Activated CD4-positive, alpha-beta memory T cell treated with anti-CD3 and anti-CD28 coated beads for 36 hours (primary cell): ENCODE measurements at regions of chr1 and their contacts with region 1.

Region 1: GRCh38 chr1:36369061-36369861 is 16.5 kb downstream of the STK40 start:
- DNase-seq: peak; percentile 90
- H3K4me3 Mint-ChIP-seq: no peak overlapping the region
- H3K27ac Mint-ChIP-seq: peak overlapping the region; percentile 62
- H3K4me1 Mint-ChIP-seq: peaks cover 67% of the 10 kb centered on the region
- H3K27me3 Mint-ChIP-seq: no peaks in the 10 kb centered on the region

Region 2: DNA sequence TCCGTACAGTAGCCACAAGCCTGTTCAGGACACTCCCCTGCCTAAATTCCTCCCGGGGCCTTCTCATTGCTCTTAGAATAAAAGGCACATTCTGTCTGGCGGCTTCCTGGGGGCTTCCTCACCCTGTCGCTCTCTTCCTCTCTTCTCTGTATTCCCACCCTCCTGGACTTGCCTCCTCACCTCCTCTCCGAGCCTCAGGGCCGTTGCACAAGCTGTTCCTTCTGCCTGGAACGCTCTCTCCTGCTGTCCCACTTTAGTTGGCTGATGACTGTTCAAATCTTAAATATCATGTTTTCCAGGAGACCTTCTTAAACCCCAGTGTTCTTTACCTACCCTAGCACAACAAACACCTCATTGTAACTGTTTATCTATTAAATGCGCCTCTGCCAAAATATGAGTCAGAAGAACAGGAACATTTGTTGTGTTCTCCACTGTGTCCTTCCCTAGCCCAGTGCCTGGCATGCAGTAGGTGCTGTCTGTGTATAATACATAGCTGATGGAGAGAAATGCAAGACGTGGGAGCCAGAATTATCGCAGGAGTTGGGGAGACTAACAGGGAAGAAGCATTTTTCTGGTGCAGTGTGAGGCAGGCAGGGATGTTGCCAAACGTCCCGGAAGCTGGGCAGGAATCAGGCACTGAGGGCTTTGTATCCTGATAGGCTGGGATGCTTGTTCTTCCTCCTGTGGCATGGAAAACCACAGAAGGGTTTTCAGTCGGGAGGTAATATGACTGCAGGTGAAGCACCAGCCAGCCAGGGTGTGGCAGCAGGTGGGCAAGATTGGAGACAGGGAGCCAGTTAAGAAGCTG is 169.1 kb before region 1 on chr1:
- CTCF ChIA-PET with region 1: no interaction called
- POLR2A ChIA-PET with region 1: no interaction called
- intact Hi-C with region 1: no loop called
- DNase-seq: no peak
- H3K4me3 Mint-ChIP-seq: no peak overlapping the region
- H3K27ac Mint-ChIP-seq: no peak overlapping the region
- H3K4me1 Mint-ChIP-seq: no peaks in the 10 kb centered on the region
- H3K27me3 Mint-ChIP-seq: no peaks in the 10 kb centered on the region

Region 3: GRCh38 chr1:36306902-36307456 is 62.3 kb before region 1 on chr1:
- CTCF ChIA-PET with region 1: interaction called, 17 read pairs
- POLR2A ChIA-PET with region 1: interaction called, 3 read pairs
- intact Hi-C with region 1: no loop called
- DNase-seq: peak; percentile 95
- H3K4me3 Mint-ChIP-seq: peak overlapping the region; percentile 95
- H3K27ac Mint-ChIP-seq: peak overlapping the region; percentile 79
- H3K4me1 Mint-ChIP-seq: peaks cover 43% of the 10 kb centered on the region
- H3K27me3 Mint-ChIP-seq: no peaks in the 10 kb centered on the region

Region 4: GRCh38 chr1:36342481-36343478 is 26.5 kb before region 1 on chr1:
- CTCF ChIA-PET with region 1: interaction called, 25 read pairs
- POLR2A ChIA-PET with region 1: no interaction called
- intact Hi-C with region 1: loop called (anchors 2 kb)
- DNase-seq: peak; percentile 70
- H3K4me3 Mint-ChIP-seq: no peak overlapping the region
- H3K27ac Mint-ChIP-seq: no peak overlapping the region
- H3K4me1 Mint-ChIP-seq: peaks cover 16% of the 10 kb centered on the region
- H3K27me3 Mint-ChIP-seq: no peaks in the 10 kb centered on the region

Region 5: DNA sequence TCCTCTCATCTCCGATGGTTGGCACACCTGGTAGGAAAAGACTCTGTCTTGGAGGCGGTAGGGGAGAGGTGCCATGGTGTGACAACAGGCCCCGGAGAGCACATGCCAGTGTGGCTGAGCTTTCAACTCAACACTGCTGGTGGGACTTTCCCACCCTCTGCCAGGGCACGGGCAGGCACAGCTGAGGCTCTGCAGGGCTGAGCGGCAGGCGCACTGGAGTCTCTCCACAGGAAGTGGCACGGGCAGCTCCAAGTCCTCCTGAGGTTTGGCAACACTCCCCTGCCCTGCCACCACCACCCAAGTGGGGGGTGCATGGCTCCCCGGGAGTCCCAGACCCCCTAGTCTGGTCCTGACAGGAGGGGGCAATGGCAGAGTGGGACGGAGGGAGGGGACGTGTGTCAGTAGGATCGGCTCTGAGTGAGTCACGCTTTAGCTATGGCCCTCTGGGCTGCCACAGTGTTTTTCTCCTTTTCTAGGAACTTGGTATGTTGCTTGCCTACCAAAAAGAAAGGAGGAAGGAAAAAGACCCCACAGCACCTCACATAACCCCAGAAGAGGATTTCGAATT is 18.5 kb before region 1 on chr1:
- CTCF ChIA-PET with region 1: interaction called, 39 read pairs
- POLR2A ChIA-PET with region 1: interaction called, 4 read pairs
- intact Hi-C with region 1: no loop called
- DNase-seq: peak; percentile 67
- H3K4me3 Mint-ChIP-seq: no peak overlapping the region
- H3K27ac Mint-ChIP-seq: peak overlapping the region; percentile 73
- H3K4me1 Mint-ChIP-seq: peaks cover 32% of the 10 kb centered on the region
- H3K27me3 Mint-ChIP-seq: no peaks in the 10 kb centered on the region

Region 6: DNA sequence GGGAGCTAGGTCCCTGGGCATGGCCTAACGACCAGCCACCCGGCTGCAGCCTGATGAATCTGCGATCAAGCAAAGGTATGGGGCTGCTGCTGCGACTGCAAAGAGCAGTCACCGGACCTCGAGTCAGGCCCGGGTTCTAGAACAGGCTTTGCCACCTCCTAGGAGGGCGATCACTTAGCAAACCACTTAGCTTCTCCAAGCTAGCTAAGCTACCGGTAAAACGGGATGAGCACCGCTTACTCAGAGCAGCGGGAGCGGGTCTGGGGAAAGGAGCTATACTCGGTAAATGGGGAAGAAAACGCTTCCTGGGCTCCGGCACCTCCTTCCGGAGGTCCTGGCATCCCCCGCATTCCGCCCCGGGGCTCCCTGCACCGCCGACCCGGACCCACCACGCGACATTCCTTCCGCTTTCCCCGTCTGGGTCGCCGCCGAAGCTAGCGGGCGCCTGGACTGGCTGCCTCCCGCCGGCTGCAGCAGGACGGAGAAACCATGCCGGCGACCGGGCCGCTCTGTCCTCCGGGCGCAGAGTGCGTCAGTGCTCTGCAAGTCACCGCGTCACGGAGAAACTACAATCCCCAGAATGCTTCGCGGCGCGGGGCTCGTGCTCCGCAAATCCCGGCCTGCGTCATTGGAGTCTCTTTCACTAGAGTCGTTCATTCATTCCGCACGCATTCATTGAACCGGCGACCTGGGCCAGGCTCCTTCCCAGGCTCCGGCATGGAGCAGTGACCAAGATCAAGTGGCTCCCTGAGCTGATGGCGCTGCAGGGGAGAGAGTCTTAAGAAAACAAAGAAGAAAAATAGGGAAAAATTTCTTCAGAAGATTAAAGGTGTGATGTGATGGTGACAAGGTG is 28.3 kb after region 1 on chr1 and contains the start of gene LSM10:
- CTCF ChIA-PET with region 1: interaction called, 20 read pairs
- POLR2A ChIA-PET with region 1: interaction called, 3 read pairs
- intact Hi-C with region 1: no loop called
- DNase-seq: peak; percentile 95
- H3K4me3 Mint-ChIP-seq: peak within 1 kb of the TSS; percentile 98
- H3K27ac Mint-ChIP-seq: peak within 1 kb of the TSS; percentile 84
- H3K4me1 Mint-ChIP-seq: peaks cover 28% of the 10 kb centered on the region
- H3K27me3 Mint-ChIP-seq: no peaks in the 10 kb centered on the region
- total RNA-seq, gene LSM10: 46.0 to 47.0 TPM

Region 7: GRCh38 chr1:36486436-36487335 is 117.4 kb after region 1 on chr1:
- CTCF ChIA-PET with region 1: no interaction called
- POLR2A ChIA-PET with region 1: no interaction called
- intact Hi-C with region 1: no loop called
- DNase-seq: no peak
- H3K4me3 Mint-ChIP-seq: no peak overlapping the region
- H3K27ac Mint-ChIP-seq: no peak overlapping the region
- H3K4me1 Mint-ChIP-seq: peaks cover 10% of the 10 kb centered on the region
- H3K27me3 Mint-ChIP-seq: no peaks in the 10 kb centered on the region